ENCODE measurements at regions of chr9 and their contacts with region 1.

Region 1: GRCh38 chr9:81665322-81665871 is 23.9 kb downstream of the TLE1 start:
- DNase-seq: no peak
- H3K4me3 ChIP-seq: peak overlapping the region in 1 of 4 experiments; percentile 22; a peak in 3 of 8 replicates
- H3K27ac ChIP-seq: no peak overlapping the region
- H3K4me1 ChIP-seq: peaks cover 7 to 26% (median 12%) of the 10 kb centered on the region in 4 experiments
- H3K27me3 ChIP-seq: no peaks in the 10 kb centered on the region
- CTCF ChIP-seq: no peak
- EP300 ChIP-seq: no peak
- POLR2A ChIP-seq: no peak
- RAD21 ChIP-seq: no peak

Region 2: GRCh38 chr9:81535542-81536241 is 129.7 kb before region 1 on chr9:
- CTCF ChIA-PET with region 1: no interaction called
- POLR2A ChIA-PET with region 1: no interaction called
- DNase-seq: no peak
- H3K4me3 ChIP-seq: no peak overlapping the region
- H3K27ac ChIP-seq: no peak overlapping the region
- H3K4me1 ChIP-seq: peaks cover 0 to 2% (median under 1%) of the 10 kb centered on the region in 4 experiments; a peak in 1 of 7 replicates
- H3K27me3 ChIP-seq: no peaks in the 10 kb centered on the region
- CTCF ChIP-seq: no peak
- EP300 ChIP-seq: no peak
- POLR2A ChIP-seq: no peak
- RAD21 ChIP-seq: no peak

Region 3: GRCh38 chr9:81653240-81653639 is 12.2 kb before region 1 on chr9:
- CTCF ChIA-PET with region 1: interaction called, 9 read pairs
- POLR2A ChIA-PET with region 1: interaction called, 16 read pairs
- DNase-seq: no peak
- H3K4me3 ChIP-seq: no peak overlapping the region
- H3K27ac ChIP-seq: no peak overlapping the region
- H3K4me1 ChIP-seq: peaks cover 4 to 13% (median 6%) of the 10 kb centered on the region in 4 experiments; a peak in 6 of 7 replicates
- H3K27me3 ChIP-seq: no peaks in the 10 kb centered on the region
- CTCF ChIP-seq: no peak
- EP300 ChIP-seq: no peak
- POLR2A ChIP-seq: no peak
- RAD21 ChIP-seq: no peak

Region 4: GRCh38 chr9:81682797-81683196 is 17.4 kb after region 1 on chr9:
- CTCF ChIA-PET with region 1: interaction called, 4 read pairs
- POLR2A ChIA-PET with region 1: interaction called, 97 read pairs
- DNase-seq: no peak
- H3K4me3 ChIP-seq: no peak overlapping the region
- H3K27ac ChIP-seq: no peak overlapping the region
- H3K4me1 ChIP-seq: peaks cover 2 to 16% (median 12%) of the 10 kb centered on the region in 4 experiments; a peak in 6 of 7 replicates
- H3K27me3 ChIP-seq: no peaks in the 10 kb centered on the region
- CTCF ChIP-seq: no peak
- EP300 ChIP-seq: no peak
- POLR2A ChIP-seq: no peak
- RAD21 ChIP-seq: no peak

Measured in H1 (cell line).